HCT116 (cell line): ENCODE measurements at regions of chr7 and their contacts with region 1.

Region 1: GRCh38 chr7:141737834-141738591 is at the start of gene SSBP1:
- DNase-seq: peak; percentile 95
- ATAC-seq: peak; percentile 88
- H3K4me3 ChIP-seq: peak within 1 kb of the TSS; percentile 86 to 88
- H3K27ac ChIP-seq: peak within 1 kb of the TSS; percentile 66
- H3K4me1 ChIP-seq: peaks cover 4 to 13% of the 10 kb centered on the region in 2 experiments; a peak in 3 of 4 replicates
- H3K27me3 ChIP-seq: no peaks in the 10 kb centered on the region
- CTCF ChIP-seq: peak; percentile 68 to 97 (median 78)
- POLR2A ChIP-seq: peak; percentile 81
- RAD21 ChIP-seq: peak; percentile 64
- total RNA-seq, gene SSBP1: 171 TPM

Region 2: DNA sequence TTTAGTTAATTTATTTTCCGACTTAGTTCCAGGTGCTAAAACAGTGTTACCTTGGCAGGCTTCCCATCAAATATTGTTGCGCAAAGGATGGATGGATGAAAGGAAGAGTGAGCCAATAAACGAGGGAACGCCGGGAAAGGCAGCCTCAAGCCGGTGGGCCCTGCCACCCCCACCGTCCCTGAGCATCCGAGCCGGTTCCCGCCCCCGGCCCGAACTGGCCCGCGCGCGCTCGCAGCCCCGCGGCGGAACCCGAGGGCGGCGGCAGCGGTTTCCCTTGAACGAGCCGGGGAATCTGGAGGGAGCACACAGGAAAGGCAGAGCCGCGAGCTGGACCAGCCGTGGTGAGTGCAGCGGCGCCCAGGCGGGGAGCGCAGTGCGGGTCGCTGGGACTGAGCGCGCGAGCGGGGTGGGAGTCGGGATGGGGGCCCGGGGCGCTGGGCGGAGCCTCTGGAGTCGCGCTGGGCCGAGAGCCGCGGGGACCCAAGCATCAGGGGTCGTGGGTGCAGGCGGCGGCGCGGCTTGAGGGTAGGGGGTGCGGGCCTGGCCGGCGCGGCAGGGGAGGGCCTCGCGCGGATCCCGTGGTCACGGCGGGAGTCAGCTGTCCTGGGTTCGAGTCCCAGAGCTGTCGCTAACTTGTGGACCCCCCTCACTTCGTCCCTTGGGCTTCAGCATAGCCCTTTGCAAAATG is 186.8 kb before region 1 on chr7 and contains the start of gene AGK:
- CTCF ChIA-PET with region 1: interaction called, 3 read pairs
- POLR2A ChIA-PET with region 1: no interaction called
- RAD21 ChIA-PET with region 1: no interaction called
- intact Hi-C with region 1: loop called (anchors 10 kb)
- DNase-seq: peak; percentile 52
- ATAC-seq: peak; percentile 96
- H3K4me3 ChIP-seq: peak within 1 kb of the TSS; percentile 83 to 85
- H3K27ac ChIP-seq: peak within 1 kb of the TSS; percentile 58; the same call in 1 of the 2 replicates
- H3K4me1 ChIP-seq: peaks cover 4 to 15% of the 10 kb centered on the region in 2 experiments; a peak in 2 of 4 replicates
- H3K27me3 ChIP-seq: no peaks in the 10 kb centered on the region
- CTCF ChIP-seq: no peak
- POLR2A ChIP-seq: peak; percentile 86
- RAD21 ChIP-seq: no peak
- total RNA-seq, gene AGK: 36.3 TPM